Caco-2 (cell line): ENCODE measurements at regions of chr5 and their contacts with region 1.

Region 1: DNA sequence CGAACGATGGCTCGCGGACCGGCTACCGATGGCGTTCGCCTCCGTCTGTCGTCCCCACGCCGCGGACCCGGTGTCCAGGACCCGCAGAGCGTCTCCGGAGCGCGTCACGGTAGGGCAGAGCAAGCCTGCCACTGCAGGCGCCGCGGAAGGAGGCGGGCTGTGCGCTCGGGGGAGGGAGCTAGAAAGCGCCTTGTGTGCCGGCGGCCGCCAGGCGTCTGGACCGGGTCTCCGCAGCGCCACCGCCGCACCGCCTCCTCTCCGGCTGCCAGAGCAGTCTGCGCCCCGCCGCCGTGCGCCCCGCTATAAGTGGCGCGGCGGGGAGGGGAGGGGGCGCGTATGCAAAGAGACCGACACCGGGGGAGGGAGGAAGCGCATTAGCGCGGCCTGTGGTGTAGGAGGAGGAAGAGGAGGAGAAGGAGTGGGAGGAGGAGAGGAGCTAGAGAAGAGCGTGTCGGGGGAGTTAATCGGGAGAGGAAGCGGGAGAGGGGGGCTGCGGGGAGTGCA is at the start of gene ENC1:
- DNase-seq: peak; percentile 93 to 94
- H3K4me3 ChIP-seq: peak within 1 kb of the TSS; percentile 99
- H3K4me3 Mint-ChIP-seq: peak within 1 kb of the TSS; percentile 93
- H3K27ac Mint-ChIP-seq: peak within 1 kb of the TSS; percentile 93
- H3K4me1 ChIP-seq: peaks cover 39% of the 10 kb centered on the region
- H3K4me1 Mint-ChIP-seq: peaks cover 39% of the 10 kb centered on the region
- H3K27me3 ChIP-seq: no peaks in the 10 kb centered on the region
- H3K27me3 Mint-ChIP-seq: no peaks in the 10 kb centered on the region
- CTCF ChIP-seq: peak; percentile 44 to 51
- total RNA-seq, gene ENC1: 92.7 and 106 TPM in 2 replicates

Region 2: DNA sequence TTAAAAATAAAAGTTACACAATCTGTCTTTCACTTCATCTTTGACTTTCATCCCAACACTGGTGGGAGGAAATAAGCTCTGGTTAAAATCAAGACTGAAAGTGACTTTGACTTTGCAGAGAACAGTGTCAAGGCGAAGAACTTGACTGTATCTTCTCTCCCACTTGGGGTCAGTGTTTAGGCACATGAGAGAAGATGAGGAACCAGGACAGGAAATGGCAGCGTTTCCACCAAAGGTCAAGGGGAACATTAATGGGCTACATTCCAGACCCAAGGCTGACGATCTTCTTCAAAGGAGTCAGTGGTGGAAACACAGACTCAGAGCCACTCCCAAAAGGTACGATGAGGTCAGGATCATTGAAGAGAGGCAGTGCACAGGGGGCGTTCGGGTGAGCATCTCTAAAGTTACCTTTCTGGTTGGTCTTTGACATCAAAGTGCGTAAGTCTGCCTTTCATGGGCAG is 605.0 kb before region 1 on chr5:
- CTCF ChIA-PET with region 1: no interaction called
- POLR2A ChIA-PET with region 1: no interaction called
- intact Hi-C with region 1: loop called (anchors 1 kb)
- DNase-seq: peak; percentile 63 to 71
- H3K4me3 ChIP-seq: no peak overlapping the region
- H3K4me3 Mint-ChIP-seq: no peak overlapping the region
- H3K27ac Mint-ChIP-seq: no peak overlapping the region
- H3K4me1 ChIP-seq: 0 out of 2 replicates have a peak, but pooled peaks cover 5% of the 10 kb centered on the region
- H3K4me1 Mint-ChIP-seq: peaks cover 7% of the 10 kb centered on the region
- H3K27me3 ChIP-seq: no peaks in the 10 kb centered on the region
- H3K27me3 Mint-ChIP-seq: no peaks in the 10 kb centered on the region
- CTCF ChIP-seq: peak; percentile 40 to 46

Region 3: GRCh38 chr5:74127381-74128320 is 512.9 kb before region 1 on chr5:
- CTCF ChIA-PET with region 1: no interaction called
- POLR2A ChIA-PET with region 1: no interaction called
- intact Hi-C with region 1: loop called (anchors 2 kb)
- DNase-seq: peak in 1 of 2 experiments; percentile 36
- H3K4me3 ChIP-seq: no peak overlapping the region
- H3K4me3 Mint-ChIP-seq: peak overlapping the region; percentile 32
- H3K27ac Mint-ChIP-seq: no peak overlapping the region
- H3K4me1 ChIP-seq: 0 out of 2 replicates have a peak, but pooled peaks cover 10% of the 10 kb centered on the region
- H3K4me1 Mint-ChIP-seq: peaks cover 8% of the 10 kb centered on the region
- H3K27me3 ChIP-seq: no peaks in the 10 kb centered on the region
- H3K27me3 Mint-ChIP-seq: peaks cover 2% of the 10 kb centered on the region
- CTCF ChIP-seq: peak; percentile 34 to 55

Region 4: DNA sequence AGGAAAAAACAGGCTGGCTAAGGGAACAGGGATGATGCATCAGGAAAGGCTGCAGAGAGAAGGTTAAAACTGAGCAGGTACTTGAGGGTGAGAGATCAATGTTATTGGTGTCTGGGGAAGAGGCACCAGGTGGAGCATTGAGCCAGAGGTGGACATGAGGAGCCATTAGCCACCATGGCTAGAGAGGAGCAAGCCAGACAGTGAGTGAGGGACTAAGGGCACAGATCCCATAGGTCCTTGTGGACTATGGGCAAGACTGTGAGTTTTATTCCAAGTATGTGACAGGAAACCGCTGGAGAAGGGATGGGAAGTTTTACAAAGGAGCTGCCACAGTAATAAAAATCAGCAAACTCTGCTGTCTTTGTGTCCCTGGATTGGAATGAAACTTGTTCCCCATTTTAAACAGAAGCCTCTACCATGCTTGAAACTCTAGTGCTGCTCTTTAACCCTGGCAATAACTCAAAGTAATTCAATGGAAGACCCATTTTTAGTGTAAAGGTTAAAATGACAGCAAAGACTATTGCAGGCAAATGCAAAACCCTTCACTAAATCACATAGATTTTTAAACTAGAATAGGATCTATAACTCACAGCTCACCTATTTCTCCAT is 349.8 kb before region 1 on chr5:
- CTCF ChIA-PET with region 1: no interaction called
- POLR2A ChIA-PET with region 1: no interaction called
- intact Hi-C with region 1: loop called (anchors 1 kb)
- DNase-seq: peak; percentile 14 to 43
- H3K4me3 ChIP-seq: no peak overlapping the region
- H3K4me3 Mint-ChIP-seq: no peak overlapping the region
- H3K27ac Mint-ChIP-seq: no peak overlapping the region
- H3K4me1 ChIP-seq: no peaks in the 10 kb centered on the region
- H3K4me1 Mint-ChIP-seq: peaks cover 6% of the 10 kb centered on the region
- H3K27me3 ChIP-seq: no peaks in the 10 kb centered on the region
- H3K27me3 Mint-ChIP-seq: peaks cover 4% of the 10 kb centered on the region
- CTCF ChIP-seq: no peak

Region 5: DNA sequence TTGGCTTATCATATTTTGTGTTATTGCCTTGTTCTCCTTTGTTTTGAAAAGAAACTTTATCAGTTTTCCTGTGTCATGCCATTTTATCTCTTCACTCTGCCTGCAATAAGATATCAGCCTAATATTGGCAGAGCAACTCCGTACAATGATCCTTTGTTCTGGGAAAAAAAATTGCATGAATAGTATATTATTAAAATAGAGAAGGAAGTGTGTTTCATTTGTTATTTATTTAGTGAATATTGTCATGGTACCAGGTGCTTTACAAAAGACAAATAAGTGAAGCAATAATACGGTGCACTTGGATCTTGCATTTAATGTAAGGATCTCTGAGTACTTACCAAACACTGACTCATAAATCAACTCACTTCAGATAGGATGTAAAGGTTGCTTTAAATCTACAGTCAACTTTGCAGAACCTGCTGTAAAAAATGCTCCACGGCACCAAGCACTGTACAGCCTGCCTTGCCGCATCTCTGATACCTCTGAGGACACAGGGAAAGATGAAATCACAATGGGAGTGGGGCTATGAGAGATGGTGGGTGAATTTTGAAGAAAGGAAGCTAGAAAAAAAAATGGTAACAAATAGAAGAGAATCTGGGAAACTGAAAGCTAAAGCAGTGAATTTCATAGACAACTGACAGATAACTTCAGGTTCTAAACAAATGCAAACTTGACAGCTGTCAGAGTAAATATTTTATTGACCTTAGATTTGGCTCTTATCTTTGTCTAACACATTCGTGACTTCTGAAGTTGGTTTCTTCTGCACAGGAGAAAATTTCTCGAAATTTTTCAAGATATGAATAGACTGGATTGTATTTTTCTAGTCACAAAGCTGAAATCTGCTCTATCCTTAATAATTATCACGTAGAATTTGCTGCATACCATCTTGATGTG is 232.1 kb before region 1 on chr5:
- CTCF ChIA-PET with region 1: no interaction called
- POLR2A ChIA-PET with region 1: interaction called, 3 read pairs
- intact Hi-C with region 1: loop called (anchors 1 kb)
- DNase-seq: peak; percentile 53 to 59
- H3K4me3 ChIP-seq: no peak overlapping the region
- H3K4me3 Mint-ChIP-seq: peak overlapping the region; percentile 61
- H3K27ac Mint-ChIP-seq: peak overlapping the region; percentile 19
- H3K4me1 ChIP-seq: peaks cover 73% of the 10 kb centered on the region
- H3K4me1 Mint-ChIP-seq: peaks cover 37% of the 10 kb centered on the region
- H3K27me3 ChIP-seq: no peaks in the 10 kb centered on the region
- H3K27me3 Mint-ChIP-seq: no peaks in the 10 kb centered on the region
- CTCF ChIP-seq: no peak

Region 6: DNA sequence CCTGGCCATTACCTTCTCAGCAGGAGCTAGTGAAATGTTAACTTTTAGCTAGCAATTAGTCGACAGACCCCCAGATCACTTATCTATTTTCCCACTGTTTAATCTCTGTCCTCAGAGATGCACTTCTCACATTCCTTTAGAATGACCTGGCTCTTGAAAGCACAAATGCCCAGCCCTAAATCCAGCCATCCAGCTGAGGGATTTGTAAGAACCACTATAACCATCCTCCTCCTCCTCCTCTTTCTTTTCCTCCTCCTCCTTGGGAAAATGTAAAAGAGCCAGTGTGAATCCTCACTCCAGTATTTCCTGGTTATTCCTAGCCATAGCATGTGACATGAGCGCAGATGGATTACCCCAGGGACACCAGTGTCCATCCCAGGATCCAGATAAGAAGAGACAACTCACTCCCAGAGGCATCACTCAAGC is 124.3 kb before region 1 on chr5:
- CTCF ChIA-PET with region 1: no interaction called
- POLR2A ChIA-PET with region 1: interaction called, 3 read pairs
- intact Hi-C with region 1: loop called (anchors 2 kb)
- DNase-seq: peak in 1 of 2 experiments; percentile 54
- H3K4me3 ChIP-seq: no peak overlapping the region
- H3K4me3 Mint-ChIP-seq: peak overlapping the region; percentile 20
- H3K27ac Mint-ChIP-seq: peak overlapping the region; percentile 72
- H3K4me1 ChIP-seq: peaks cover 35% of the 10 kb centered on the region
- H3K4me1 Mint-ChIP-seq: peaks cover 30% of the 10 kb centered on the region
- H3K27me3 ChIP-seq: no peaks in the 10 kb centered on the region
- H3K27me3 Mint-ChIP-seq: no peaks in the 10 kb centered on the region
- CTCF ChIP-seq: no peak

Region 7: DNA sequence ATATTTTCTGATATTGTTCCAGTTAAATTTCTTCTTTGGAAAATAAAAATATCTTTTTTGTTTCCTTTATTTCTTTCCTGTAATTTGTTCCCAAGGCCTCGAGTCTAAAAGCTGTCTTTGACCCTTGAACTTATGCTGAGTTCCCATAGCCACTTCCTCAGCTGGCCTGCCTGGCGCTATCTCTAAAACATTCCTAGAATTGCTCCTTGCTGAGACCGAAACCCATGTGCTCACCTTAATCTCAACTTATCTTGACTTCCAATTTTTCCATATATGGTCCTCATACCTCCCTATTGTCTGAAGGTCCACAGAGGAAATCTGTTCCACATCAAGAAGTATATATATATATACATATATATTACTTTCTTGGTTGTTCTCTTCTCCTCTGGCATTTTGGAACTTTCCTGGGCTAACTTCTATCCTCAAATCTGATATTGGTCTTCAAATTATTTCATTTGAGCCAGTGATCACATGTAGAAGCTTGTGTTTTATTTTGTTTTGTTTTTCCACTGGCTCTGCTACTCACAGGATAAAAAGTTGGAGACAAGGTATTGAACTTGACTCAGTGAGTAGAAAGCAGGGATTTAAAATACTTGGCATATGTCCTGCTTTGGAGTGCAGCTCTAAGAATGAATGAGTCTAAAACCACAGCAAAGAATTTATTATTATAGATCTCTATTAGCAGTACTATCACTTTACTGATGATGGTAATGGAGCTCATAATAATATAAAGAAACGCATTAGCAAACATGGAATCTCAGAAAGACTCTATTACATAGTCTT is 45.2 kb before region 1 on chr5:
- CTCF ChIA-PET with region 1: interaction called, 5 read pairs
- POLR2A ChIA-PET with region 1: interaction called, 5 read pairs
- intact Hi-C with region 1: loop called (anchors 2 kb)
- DNase-seq: peak; percentile 82 to 89
- H3K4me3 ChIP-seq: no peak overlapping the region
- H3K4me3 Mint-ChIP-seq: peak overlapping the region; percentile 19
- H3K27ac Mint-ChIP-seq: peak overlapping the region; percentile 92
- H3K4me1 ChIP-seq: peaks cover 41% of the 10 kb centered on the region
- H3K4me1 Mint-ChIP-seq: peaks cover 46% of the 10 kb centered on the region
- H3K27me3 ChIP-seq: no peaks in the 10 kb centered on the region
- H3K27me3 Mint-ChIP-seq: no peaks in the 10 kb centered on the region
- CTCF ChIP-seq: no peak

Region 8: DNA sequence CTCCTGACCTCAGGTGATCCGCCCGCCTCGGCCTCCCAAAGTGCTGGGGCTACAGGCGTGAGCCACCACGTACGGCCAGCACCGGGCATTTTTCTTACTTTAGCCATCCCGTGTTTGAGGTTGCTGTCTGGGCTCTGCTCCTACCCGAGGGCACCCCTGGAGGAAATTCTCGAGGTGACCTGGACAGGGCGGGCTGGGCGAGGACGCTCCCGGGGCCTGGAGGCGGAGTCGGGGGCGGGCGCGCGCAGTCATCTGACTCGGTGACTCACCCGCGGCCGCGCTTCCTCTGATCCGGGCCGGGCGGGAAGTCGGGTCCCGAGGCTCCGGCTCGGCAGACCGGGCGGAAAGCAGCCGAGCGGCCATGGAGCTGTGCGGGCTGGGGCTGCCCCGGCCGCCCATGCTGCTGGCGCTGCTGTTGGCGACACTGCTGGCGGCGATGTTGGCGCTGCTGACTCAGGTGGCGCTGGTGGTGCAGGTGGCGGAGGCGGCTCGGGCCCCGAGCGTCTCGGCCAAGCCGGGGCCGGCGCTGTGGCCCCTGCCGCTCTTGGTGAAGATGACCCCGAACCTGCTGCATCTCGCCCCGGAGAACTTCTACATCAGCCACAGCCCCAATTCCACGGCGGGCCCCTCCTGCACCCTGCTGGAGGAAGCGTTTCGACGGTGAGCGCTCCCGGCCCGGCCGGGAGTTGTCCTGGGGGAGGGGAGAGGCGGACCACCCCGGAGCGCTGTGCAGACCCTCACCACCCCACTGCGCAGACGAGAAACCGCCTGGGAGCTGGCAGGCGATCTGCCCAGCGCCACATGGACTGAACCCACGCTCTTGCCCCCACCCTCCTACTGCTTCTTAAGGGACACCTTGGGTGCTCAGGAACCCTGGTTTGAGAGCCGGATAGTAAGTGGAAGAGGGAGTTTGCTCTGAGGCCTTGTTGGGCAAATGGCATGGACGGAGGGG is 44.7 kb after region 1 on chr5 and contains the start of gene HEXB:
- CTCF ChIA-PET with region 1: no interaction called
- POLR2A ChIA-PET with region 1: no interaction called
- intact Hi-C with region 1: no loop called
- DNase-seq: peak; percentile 93 to 94
- H3K4me3 ChIP-seq: peak within 1 kb of the TSS; percentile 96
- H3K4me3 Mint-ChIP-seq: peak within 1 kb of the TSS; percentile 71
- H3K27ac Mint-ChIP-seq: peak within 1 kb of the TSS; percentile 8
- H3K4me1 ChIP-seq: peaks cover 13% of the 10 kb centered on the region
- H3K4me1 Mint-ChIP-seq: peaks cover 27% of the 10 kb centered on the region
- H3K27me3 ChIP-seq: no peaks in the 10 kb centered on the region
- H3K27me3 Mint-ChIP-seq: no peaks in the 10 kb centered on the region
- CTCF ChIP-seq: peak in 1 of 2 experiments; percentile 7
- total RNA-seq, gene HEXB: 217 and 230 TPM in 2 replicates